ENCODE measurements at regions of chrX and their contacts with region 1.

Region 1: GRCh38 chrX:77014377-77015372 is 432.5 kb upstream of the FGF16 start:
- DNase-seq: peak; percentile 57
- H3K4me3 ChIP-seq: peak overlapping the region; percentile 41
- H3K27ac ChIP-seq: no peak overlapping the region
- H3K4me1 ChIP-seq: peaks cover 9% of the 10 kb centered on the region
- CTCF ChIP-seq: no peak

Region 2: DNA sequence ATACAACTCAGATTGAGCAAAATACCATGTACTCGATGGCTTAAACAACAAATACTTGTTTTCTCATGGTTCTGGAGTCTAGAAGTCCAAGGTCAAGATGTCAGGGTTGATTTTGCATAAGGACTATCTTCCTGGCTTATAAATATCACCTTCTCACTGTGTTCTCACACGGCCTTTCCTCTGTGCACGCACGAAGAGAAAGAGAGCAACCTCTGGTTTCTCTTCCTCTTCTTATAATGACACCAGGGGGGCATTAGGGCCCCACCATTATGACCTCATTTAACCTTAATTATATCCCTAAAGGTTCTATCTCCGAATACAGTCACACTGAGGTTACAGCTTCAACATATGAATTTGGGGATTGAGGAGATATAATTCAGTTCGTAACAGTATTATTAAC is 83.2 kb before region 1 on chrX:
- CTCF ChIA-PET with region 1: no interaction called
- POLR2A ChIA-PET with region 1: no interaction called
- intact Hi-C with region 1: loop called (anchors 2 kb)
- DNase-seq: peak; percentile 53
- H3K4me3 ChIP-seq: peak overlapping the region; percentile 5
- H3K27ac ChIP-seq: peak overlapping the region; percentile 55
- H3K4me1 ChIP-seq: peaks cover 17% of the 10 kb centered on the region
- CTCF ChIP-seq: no peak

Region 3: DNA sequence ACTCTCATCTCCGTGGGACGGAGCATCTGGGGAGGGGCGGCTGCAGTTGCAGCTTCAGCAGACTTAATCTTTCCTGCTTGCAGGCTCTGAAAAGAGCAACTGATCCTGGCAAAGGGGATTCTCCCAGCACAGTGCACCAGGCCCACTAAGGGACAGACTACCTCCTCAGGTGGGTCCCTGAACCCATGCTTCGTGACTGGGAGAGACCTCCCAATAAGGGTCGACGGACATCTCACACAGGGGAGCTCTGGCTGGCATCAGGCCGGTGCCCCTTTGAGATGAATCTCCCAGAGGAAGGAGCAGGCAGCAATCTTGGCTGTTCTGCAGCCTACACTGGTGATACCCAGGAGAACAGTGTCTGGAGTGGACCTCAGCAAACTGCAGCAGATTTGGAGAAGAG is 129.2 kb after region 1 on chrX:
- CTCF ChIA-PET with region 1: no interaction called
- POLR2A ChIA-PET with region 1: no interaction called
- intact Hi-C with region 1: no loop called
- DNase-seq: no peak
- H3K4me3 ChIP-seq: no peak overlapping the region
- H3K27ac ChIP-seq: no peak overlapping the region
- H3K4me1 ChIP-seq: no peaks in the 10 kb centered on the region
- CTCF ChIP-seq: no peak

Measured in OCI-LY7 (cell line).